ENCODE measurements at regions of chr22 and their contacts with region 1.

Region 1: DNA sequence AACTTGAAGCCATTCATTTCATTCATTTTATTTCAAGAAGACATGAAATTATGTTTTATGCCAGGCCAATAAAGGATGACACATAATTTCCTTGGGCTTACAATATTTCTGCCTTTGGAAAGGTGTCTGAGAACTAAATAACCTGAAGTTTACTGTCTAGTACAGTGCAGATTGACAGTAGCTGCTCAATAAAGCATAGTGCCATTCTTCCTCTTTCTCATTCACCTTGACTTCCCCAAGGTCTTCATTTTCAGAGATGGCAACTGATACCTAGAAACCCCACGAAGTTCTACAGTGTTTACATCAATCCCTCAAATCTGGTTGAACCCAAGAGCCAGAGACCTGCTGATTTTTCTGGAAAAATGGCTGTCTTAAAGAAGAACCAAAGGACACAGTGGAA is 144.3 kb upstream of the SYN3 start:
- DNase-seq: no peak

Region 2: DNA sequence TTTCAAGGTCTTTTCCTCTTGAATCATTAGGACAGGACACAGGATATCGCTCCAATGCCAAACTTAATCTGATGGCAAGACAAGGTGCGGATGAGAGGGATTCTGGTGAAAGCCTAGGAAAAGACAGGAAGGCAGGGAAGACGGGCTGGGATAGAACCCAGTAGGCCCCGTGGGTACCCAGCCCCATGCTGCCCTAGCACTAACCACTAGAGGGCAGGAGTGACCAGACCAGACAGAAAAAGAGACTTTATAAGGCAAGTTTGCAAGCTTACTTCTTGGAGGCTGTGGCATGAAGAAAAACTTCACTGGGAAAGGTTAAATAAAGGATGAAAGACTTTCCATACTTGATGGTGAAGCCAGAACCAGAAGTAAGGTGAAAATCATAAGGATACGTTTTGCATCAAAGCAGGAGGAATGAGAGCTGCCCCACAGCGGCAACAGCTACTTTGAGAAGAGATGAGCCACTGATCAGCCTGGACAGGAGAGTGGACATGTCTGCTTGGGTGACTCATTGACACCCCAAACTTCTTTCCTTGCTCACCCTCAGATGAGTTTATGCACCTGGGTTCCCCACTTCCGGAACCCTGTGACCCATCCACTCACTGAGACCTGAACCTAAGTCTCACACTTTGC is 184.1 kb before region 1 on chr22:
- intact Hi-C with region 1: loop called (anchors 5 kb)
- DNase-seq: peak; percentile 67

Region 3: DNA sequence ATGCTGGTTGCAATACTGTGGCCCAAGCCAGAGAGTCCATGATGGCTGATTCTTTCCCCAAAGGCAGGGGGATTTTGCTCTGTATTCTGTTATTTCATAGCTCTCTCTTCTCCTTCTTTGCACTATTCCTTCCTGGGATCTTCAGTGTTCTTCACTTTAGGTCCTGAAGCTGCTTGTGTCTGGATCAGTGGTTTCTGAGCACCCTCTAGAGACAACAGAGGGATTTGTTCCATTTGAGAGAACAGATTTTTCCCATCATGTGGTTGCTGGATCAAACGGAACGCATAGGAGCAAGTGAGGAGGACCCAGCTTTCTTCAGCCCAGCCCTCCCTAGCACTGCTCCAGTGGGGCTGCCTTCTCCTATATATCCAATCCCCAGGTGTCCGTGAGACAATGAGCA is 75.6 kb before region 1 on chr22:
- intact Hi-C with region 1: no loop called
- DNase-seq: no peak

Measured in cardiac septum (tissue), 1 donor.